Tibial artery (tissue), 4 donors: ENCODE measurements at regions of chr22 and their contacts with region 1.

Region 1: DNA sequence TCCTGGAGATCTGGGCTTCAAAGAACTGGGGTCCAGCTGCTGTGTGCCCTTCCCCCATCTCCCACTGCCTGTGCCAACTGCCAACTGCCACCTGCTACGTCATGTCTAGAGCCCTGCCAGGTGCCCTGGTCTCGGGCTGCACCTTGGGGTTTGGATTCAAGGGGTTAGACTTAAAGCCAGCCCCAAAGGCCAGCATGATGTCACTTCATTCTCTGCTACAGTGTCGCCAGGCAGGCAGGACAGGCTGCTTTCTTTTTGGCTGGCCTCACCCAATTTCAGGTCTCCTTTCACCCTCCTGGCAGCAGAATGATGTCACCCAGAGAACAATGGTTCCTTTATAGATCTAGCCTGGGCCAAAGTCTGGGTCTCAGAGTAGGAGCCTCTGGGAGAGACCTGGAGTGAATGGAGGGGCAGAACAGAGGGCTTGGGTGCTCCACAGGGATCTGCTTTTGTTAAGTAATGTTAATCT is 79.5 kb upstream of the CRYBB3 start:
- DNase-seq: no peak
- H3K4me3 ChIP-seq: no peak overlapping the region
- H3K27ac ChIP-seq: peak overlapping the region; percentile 6 to 51
- H3K4me1 ChIP-seq: peaks cover 0 to 71% (median 27%) of the 10 kb centered on the region in 4 donors
- H3K27me3 ChIP-seq: no peaks in the 10 kb centered on the region
- CTCF ChIP-seq: no peak

Region 2: DNA sequence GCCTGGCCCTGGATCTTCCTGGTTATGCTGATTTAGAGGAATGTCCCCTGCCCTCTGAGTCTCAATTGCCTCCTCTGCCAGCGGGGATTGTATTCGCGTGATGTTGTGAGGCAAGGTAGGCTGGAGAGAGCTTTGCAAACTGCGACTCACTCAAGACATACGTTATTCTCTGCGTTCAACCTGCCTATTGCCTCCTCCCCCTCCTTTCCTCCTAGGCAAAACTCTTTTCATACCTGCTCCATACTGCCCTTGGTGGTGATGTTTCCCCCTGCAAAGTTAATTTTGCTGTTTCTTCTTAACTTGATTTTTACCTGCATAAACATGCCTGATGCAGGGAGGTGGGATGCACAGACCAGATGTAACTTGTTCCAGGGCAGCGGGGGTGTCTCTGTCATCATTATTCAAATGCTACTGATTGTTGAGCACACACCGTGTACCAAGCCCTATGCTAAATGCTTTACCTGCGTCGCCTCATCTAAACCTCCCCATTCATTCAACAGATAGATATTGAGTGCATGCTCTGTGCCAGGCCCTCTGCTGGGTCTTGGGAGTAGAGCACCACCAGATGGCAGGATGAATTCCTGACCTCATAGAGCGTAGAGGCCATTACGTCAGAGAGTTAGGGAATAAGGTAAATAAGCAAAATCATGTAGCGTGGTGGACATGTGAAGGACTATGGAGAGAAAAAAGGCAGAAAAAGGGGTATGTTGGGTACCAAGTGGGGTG is 285.1 kb before region 1 on chr22:
- intact Hi-C with region 1: no loop called
- DNase-seq: no peak
- H3K4me3 ChIP-seq: no peak overlapping the region
- H3K27ac ChIP-seq: no peak overlapping the region
- H3K4me1 ChIP-seq: no peaks in the 10 kb centered on the region
- H3K27me3 ChIP-seq: no peaks in the 10 kb centered on the region
- CTCF ChIP-seq: no peak

Region 3: DNA sequence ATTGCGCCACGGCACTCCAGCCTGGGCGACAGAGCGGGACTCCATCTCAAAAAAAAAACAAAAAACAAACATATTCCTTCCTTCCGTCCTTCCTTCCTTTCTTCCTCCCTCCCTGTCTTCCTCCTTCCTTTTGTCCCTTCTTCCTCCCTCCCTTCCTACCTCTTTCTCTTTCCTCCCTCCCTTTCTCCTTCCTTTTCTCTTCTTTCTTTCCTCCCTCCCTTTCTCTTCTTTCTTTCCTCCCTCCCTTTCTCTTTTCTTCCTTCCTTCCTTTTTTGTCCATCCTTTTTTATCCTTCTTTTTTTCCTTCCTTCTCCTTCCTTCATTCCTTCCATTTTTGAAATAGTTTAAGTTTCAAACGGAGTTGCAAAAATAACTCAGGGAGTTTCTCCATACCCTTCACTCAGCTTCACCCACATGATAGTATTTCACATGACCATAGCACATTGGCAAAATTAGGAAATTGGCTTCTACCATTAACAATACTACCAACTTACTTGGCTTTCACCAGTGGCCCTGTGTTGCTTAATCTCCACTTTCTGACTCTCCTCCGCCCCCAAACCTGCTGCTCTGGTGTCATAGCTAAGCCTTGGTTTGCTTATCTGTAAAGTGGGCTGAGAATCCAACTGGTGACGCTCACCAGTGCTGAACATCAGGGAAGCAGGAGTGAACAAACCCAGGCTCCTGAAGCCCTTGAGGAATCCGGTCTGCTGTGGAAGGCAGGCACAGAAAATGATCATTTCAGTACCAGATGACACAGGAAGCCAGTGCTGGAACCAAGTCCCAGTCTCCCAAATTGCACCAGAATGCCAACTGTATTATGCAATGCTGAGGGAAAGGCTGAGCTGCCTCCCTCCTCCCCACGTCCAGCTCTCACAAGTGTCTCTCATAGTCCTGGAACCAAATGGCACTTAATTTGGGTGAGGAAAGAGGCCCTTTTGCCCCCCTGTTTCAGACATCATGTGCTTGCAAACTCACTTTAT is 62.3 kb after region 1 on chr22:
- intact Hi-C with region 1: loop called (anchors 1 kb)
- DNase-seq: peak; percentile 40 to 75
- H3K4me3 ChIP-seq: no peak overlapping the region
- H3K27ac ChIP-seq: peak overlapping the region; percentile 42 to 63
- H3K4me1 ChIP-seq: peaks cover 0 to 21% (median 6%) of the 10 kb centered on the region in 4 donors
- H3K27me3 ChIP-seq: no peaks in the 10 kb centered on the region
- CTCF ChIP-seq: no peak